ENCODE measurements at regions of chr18 and their contacts with region 1.

Region 1: GRCh38 chr18:37385846-37386778 is 179.5 kb downstream of the CELF4 start:
- DNase-seq: no peak
- H3K4me3 ChIP-seq: no peak overlapping the region
- CTCF ChIP-seq: peak; percentile 33

Region 2: GRCh38 chr18:37476182-37476581 is 90.1 kb after region 1 on chr18:
- CTCF ChIA-PET with region 1: interaction called, 29 read pairs
- POLR2A ChIA-PET with region 1: no interaction called
- DNase-seq: no peak
- H3K4me3 ChIP-seq: no peak overlapping the region
- CTCF ChIP-seq: peak; percentile 60

Region 3: GRCh38 chr18:37701967-37702366 is 315.9 kb after region 1 on chr18:
- CTCF ChIA-PET with region 1: no interaction called
- POLR2A ChIA-PET with region 1: no interaction called
- DNase-seq: no peak
- H3K4me3 ChIP-seq: no peak overlapping the region
- CTCF ChIP-seq: no peak

Measured in AG04449 (cell line).